Activated T-helper 2 cell treated with anti-CD3 and anti-CD28 coated beads, Interferon-gamma antibody, Interleukin-2, Interleukin-4, amounts not matched to agents 10 μg/mL and 5 μg/mL and 100 μg/mL, durations not matched to agents 14 hours and 24 hours and 36 hours (primary cell): ENCODE measurements at regions of chr15 and their contacts with region 1.

Region 1: DNA sequence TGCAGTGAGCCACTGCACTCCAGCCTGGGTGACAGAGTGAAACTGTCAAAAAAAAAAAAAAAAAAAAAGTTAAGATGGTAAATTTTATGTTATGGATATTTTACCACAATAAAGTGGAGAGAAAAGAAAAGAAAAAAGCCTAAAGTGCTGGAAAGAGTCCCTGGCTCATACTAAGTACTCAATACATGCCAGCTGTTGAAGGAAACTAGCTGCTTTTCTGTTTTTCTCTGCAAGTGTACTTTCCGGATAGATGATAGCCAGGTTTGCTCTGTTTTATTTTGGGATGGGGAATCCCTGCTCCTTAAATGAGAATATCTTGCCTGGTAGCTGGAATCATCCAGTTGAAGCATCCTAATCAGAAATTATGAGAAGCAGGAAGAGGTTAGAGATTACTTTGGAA is 10.9 kb downstream of the EID1 start:
- DNase-seq: no peak
- H3K4me3 Mint-ChIP-seq: no peak overlapping the region
- H3K27ac Mint-ChIP-seq: peak overlapping the region; percentile 30
- H3K4me1 Mint-ChIP-seq: peaks cover 40% of the 10 kb centered on the region
- H3K27me3 Mint-ChIP-seq: no peaks in the 10 kb centered on the region

Region 2: GRCh38 chr15:48940448-48940893 is 51.6 kb after region 1 on chr15:
- intact Hi-C with region 1: loop called (anchors 2 kb)
- DNase-seq: no peak
- H3K4me3 Mint-ChIP-seq: no peak overlapping the region
- H3K27ac Mint-ChIP-seq: peak overlapping the region; percentile 85
- H3K4me1 Mint-ChIP-seq: peaks cover 49% of the 10 kb centered on the region
- H3K27me3 Mint-ChIP-seq: no peaks in the 10 kb centered on the region